ENCODE measurements at regions of chr2 and their contacts with region 1.

Region 1: DNA sequence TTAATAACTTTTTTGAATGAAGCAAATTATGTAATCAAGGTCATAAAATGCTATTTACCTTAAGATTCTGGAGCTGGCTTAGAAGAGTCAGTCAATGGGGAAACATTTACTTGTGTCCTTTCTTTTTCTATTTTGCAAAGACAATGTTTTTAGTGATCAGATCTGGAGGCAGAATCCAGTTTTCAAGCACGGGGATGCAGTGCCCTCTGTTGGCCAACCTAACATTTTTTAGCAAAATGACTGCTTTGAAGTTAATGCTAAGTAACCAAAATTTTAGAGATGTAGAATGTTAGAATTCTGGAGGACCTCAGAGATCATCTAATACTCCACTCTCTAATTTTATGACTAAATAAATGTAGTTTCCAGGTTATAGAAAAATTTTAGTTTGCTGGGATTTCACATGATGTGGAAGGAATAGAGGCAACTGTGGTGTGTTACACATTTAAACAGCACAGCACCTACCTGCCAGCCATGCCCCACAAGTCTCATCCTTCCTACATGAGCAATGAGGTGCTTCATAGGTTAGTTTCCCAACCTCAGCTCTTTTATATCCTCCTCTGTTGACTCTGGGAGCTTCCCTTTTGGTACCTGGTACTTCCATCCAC is 23.6 kb upstream of the SLC9A4 start:
- DNase-seq: peak; percentile 67
- H3K4me3 ChIP-seq: no peak overlapping the region
- H3K27ac ChIP-seq: no peak overlapping the region
- H3K4me1 ChIP-seq: no peaks in the 10 kb centered on the region
- H3K27me3 ChIP-seq: peaks cover 0 to 5% of the 10 kb centered on the region in 2 experiments
- CTCF ChIP-seq: peak; percentile 53 to 58
- POLR2A ChIP-seq: no peak

Region 2: GRCh38 chr2:102217032-102217431 is 232.4 kb before region 1 on chr2:
- CTCF ChIA-PET with region 1: no interaction called
- POLR2A ChIA-PET with region 1: no interaction called
- dilution Hi-C with region 1: no loop called
- intact Hi-C with region 1: no loop called
- DNase-seq: no peak
- H3K4me3 ChIP-seq: no peak overlapping the region
- H3K27ac ChIP-seq: no peak overlapping the region
- H3K4me1 ChIP-seq: no peaks in the 10 kb centered on the region
- H3K27me3 ChIP-seq: no peaks in the 10 kb centered on the region
- CTCF ChIP-seq: no peak
- POLR2A ChIP-seq: no peak

Region 3: DNA sequence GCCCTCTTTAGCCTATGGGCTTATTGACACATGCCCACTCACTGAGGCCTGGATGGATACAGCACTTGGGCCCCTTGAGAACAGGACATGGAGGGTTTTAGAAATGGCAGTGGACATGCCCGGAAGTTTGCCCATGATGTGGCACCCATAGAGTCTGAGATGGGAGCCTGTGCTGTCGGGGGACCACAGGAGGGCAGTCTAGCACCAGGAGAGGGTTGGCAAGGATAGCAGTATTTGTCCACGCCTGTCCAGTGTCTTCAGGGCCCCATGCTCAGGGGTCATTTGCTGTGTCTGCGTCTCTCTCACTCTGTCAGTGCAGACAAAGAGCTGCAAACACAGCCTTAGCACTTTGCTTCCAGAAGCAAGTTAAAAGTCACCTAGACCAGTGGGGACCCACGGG is 214.0 kb before region 1 on chr2:
- CTCF ChIA-PET with region 1: interaction called, 52 read pairs
- POLR2A ChIA-PET with region 1: no interaction called
- dilution Hi-C with region 1: no loop called
- intact Hi-C with region 1: loop called (anchors 1 kb)
- DNase-seq: peak; percentile 40
- H3K4me3 ChIP-seq: no peak overlapping the region
- H3K27ac ChIP-seq: no peak overlapping the region
- H3K4me1 ChIP-seq: peaks cover 6% of the 10 kb centered on the region
- H3K27me3 ChIP-seq: no peaks in the 10 kb centered on the region
- CTCF ChIP-seq: peak; percentile 36 to 67
- POLR2A ChIP-seq: no peak

Region 4: GRCh38 chr2:102251042-102251848 is 198.2 kb before region 1 on chr2:
- CTCF ChIA-PET with region 1: interaction called, 32 read pairs
- POLR2A ChIA-PET with region 1: no interaction called
- dilution Hi-C with region 1: no loop called
- intact Hi-C with region 1: loop called (anchors 1 kb)
- DNase-seq: peak; percentile 23
- H3K4me3 ChIP-seq: peak overlapping the region in 2 of 3 experiments; percentile 36 to 42
- H3K27ac ChIP-seq: no peak overlapping the region
- H3K4me1 ChIP-seq: peaks cover 8% of the 10 kb centered on the region
- H3K27me3 ChIP-seq: no peaks in the 10 kb centered on the region
- CTCF ChIP-seq: peak in 1 of 2 donors; percentile 34
- POLR2A ChIP-seq: no peak

Region 5: DNA sequence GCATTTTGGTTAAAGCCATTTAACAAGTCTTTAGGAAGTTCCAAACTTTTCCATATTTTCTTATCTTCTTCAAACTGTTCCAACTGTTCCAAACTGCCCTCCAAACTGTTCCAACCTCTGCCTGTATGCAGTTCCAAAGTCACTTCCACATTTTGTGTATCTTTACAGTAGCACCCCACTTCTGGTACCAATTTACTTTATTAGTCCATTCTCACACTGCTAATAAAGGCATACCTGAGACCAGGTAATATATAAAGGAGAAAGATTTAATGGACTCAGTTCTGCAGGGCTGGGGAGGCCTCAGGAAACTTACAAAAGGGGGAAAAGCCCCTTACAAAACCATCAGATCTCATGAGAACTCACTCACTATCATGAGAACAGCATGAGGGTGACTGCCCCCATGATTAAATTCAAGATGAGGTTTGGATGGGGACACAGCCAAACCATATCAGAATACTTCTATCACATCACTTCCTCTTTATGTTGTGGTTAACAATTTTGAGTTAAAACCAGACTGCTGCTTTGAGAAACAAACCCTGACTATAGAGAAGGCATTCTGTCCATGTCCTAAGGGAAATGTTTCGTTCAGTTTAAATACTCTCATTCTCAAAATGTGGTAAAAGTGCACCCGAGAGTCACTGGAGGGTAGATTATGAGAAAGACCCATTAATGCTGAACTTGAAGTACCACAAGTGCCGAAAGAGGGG is 82.9 kb before region 1 on chr2:
- CTCF ChIA-PET with region 1: no interaction called
- POLR2A ChIA-PET with region 1: no interaction called
- dilution Hi-C with region 1: no loop called
- intact Hi-C with region 1: no loop called
- DNase-seq: no peak
- H3K4me3 ChIP-seq: no peak overlapping the region
- H3K27ac ChIP-seq: no peak overlapping the region
- H3K4me1 ChIP-seq: no peaks in the 10 kb centered on the region
- H3K27me3 ChIP-seq: no peaks in the 10 kb centered on the region
- CTCF ChIP-seq: no peak
- POLR2A ChIP-seq: no peak

Region 6: GRCh38 chr2:102891296-102891695 is 441.8 kb after region 1 on chr2:
- CTCF ChIA-PET with region 1: no interaction called
- POLR2A ChIA-PET with region 1: no interaction called
- dilution Hi-C with region 1: no loop called
- intact Hi-C with region 1: no loop called
- DNase-seq: no peak
- H3K4me3 ChIP-seq: no peak overlapping the region
- H3K27ac ChIP-seq: no peak overlapping the region
- H3K4me1 ChIP-seq: no peaks in the 10 kb centered on the region
- H3K27me3 ChIP-seq: no peaks in the 10 kb centered on the region
- CTCF ChIP-seq: no peak
- POLR2A ChIP-seq: no peak

Measured in endothelial cell of umbilical vein (primary cell).